Activated naive CD4-positive, alpha-beta T cell treated with anti-CD3 and anti-CD28 coated beads for 36 hours (primary cell): ENCODE measurements at regions of chr4 and their contacts with region 1.

Region 1: DNA sequence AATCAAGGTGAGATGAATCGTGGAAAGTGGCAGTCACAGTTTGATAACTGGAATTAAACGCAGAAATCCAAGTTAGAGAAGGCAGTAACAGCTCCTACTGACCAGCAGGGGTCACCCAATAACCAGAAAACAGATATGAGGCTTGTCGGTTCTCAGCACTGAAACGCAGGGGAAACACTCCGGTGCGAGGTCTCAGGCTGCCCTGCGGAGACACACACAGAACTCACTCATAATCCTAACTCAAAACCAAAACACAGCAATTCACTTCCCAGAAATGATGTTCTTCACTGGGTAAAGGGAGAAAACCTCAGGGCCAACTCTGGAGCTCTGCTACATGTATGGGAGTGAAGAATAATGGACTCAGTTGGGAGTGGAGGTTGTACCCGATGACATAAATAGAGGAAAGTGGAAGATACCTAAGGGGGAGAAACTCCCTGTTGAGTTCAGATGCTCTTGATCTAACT is 384.4 kb downstream of the RAPGEF2 start:
- DNase-seq: peak; percentile 45
- H3K4me3 Mint-ChIP-seq: no peak overlapping the region
- H3K27ac Mint-ChIP-seq: no peak overlapping the region
- H3K4me1 Mint-ChIP-seq: peaks cover 3% of the 10 kb centered on the region
- H3K27me3 Mint-ChIP-seq: peaks cover 25% of the 10 kb centered on the region

Region 2: DNA sequence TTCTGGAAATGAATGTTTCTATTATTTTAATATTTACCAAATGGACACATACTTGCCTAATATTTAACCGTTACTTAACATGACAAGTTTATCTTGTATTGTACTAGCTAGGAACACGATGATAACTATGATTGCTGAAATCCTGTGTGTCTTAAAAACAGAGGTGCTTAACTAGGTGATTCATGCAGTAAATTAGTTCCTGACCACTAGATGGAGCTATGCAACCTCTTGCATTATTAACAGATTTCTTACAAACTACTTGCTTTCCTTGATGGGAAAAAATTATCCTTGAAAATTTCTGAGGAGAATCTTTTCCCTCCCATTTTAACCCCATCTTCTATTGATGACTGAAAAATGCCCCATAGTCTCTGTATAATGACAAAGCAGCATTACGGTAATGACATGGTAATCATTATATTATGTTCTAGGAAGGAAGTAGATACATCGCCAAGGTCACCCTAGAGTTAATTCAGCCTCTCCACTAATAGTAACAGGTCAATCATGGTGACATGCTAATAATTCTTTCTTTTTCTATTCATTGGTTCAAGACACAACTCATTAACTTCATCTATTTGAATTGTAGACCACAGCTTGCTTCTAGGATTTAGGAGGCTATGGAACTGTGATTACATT is 459.8 kb after region 1 on chr4:
- CTCF ChIA-PET with region 1: no interaction called
- intact Hi-C with region 1: loop called (anchors 10 kb)
- DNase-seq: no peak
- H3K4me3 Mint-ChIP-seq: no peak overlapping the region
- H3K27ac Mint-ChIP-seq: no peak overlapping the region
- H3K4me1 Mint-ChIP-seq: no peaks in the 10 kb centered on the region
- H3K27me3 Mint-ChIP-seq: no peaks in the 10 kb centered on the region

Region 3: DNA sequence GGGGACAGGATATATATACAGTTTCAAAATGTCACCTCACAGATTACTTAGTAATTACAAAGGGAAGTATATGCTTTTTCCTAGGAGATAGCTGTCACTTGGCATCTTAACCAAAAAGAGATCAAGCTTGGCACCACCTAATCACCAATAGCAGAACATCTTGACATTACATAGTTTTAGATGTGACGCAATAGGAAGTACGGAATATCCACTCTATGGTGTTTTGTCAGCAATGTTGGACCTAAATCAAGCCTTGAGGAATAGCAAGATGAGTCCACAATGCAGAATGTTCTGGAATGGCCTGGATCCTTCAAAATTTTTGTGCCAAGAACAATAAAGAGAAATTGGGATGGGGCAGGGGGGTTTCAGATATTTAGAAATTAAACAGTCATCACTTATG is 1188.2 kb after region 1 on chr4:
- CTCF ChIA-PET with region 1: no interaction called
- intact Hi-C with region 1: loop called (anchors 10 kb)
- DNase-seq: no peak
- H3K4me3 Mint-ChIP-seq: no peak overlapping the region
- H3K27ac Mint-ChIP-seq: no peak overlapping the region
- H3K4me1 Mint-ChIP-seq: no peaks in the 10 kb centered on the region
- H3K27me3 Mint-ChIP-seq: no peaks in the 10 kb centered on the region